Endothelial cell of umbilical vein (primary cell): ENCODE measurements at regions of chr11 and their contacts with region 1.

Region 1: DNA sequence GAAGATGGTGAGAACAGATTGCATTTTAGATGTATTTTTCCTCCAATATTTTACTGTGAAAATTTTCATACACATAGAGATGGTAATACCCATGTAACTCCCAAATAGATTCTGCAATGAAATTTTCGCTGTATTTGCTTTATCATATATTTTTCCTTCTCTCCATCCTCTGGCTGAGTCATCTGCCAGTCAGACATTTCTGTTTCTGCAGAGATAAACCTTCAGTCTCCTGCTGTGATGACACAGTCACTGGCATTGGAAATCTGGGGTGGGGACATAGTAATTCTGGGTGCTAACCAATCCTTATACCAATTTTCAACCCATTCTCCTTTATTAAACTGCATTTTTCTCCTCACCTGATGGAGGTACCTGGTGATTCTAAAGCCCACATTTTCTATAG is 33.7 kb downstream of the SVIP start:
- DNase-seq: peak; percentile 17
- H3K4me3 ChIP-seq: no peak overlapping the region
- H3K27ac ChIP-seq: no peak overlapping the region
- H3K4me1 ChIP-seq: peaks cover 22% of the 10 kb centered on the region
- H3K27me3 ChIP-seq: no peaks in the 10 kb centered on the region
- CTCF ChIP-seq: no peak
- POLR2A ChIP-seq: no peak

Region 2: DNA sequence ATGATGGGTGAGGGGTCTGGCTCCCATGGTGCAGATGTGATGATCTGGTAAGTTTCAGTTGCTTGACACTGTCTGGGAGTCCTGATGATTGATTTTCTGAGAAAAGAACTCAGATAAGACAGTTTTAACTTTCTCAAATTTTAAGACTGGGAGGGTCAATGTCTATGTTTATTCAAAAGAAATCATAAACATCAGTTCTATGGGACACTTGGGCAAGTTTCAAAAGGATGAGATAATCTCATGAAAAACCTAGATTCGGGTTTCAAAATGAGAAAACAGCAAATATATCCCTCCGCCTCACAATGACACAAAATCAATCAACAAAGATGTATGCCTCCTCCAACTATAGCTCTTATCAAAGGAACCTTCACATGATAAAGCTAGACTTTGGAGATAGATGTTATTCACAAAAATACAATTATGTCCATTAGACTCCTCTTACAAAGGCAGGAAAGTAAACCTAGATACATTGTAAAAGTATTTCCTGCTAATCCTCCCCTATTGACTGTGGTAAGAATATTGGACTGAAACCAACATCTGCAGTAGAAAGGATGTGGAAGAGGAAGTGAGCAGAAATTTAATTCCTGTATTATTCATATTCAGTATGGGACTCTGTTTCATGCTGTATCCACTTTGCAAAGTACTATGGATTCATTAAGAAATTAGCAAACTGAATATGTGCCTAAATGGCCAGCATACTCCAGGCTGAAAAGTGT is 12.1 kb after region 1 on chr11:
- CTCF ChIA-PET with region 1: interaction called, 26 read pairs
- POLR2A ChIA-PET with region 1: no interaction called
- dilution Hi-C with region 1: no loop called
- intact Hi-C with region 1: loop called (anchors 1 kb)
- DNase-seq: peak; percentile 89
- H3K4me3 ChIP-seq: peak overlapping the region in 1 of 3 experiments; percentile 16
- H3K27ac ChIP-seq: peak overlapping the region; percentile 52
- H3K4me1 ChIP-seq: peaks cover 29% of the 10 kb centered on the region
- H3K27me3 ChIP-seq: no peaks in the 10 kb centered on the region
- CTCF ChIP-seq: no peak
- POLR2A ChIP-seq: peak; percentile 61